ENCODE measurements at regions of chr10 and their contacts with region 1.

Region 1: DNA sequence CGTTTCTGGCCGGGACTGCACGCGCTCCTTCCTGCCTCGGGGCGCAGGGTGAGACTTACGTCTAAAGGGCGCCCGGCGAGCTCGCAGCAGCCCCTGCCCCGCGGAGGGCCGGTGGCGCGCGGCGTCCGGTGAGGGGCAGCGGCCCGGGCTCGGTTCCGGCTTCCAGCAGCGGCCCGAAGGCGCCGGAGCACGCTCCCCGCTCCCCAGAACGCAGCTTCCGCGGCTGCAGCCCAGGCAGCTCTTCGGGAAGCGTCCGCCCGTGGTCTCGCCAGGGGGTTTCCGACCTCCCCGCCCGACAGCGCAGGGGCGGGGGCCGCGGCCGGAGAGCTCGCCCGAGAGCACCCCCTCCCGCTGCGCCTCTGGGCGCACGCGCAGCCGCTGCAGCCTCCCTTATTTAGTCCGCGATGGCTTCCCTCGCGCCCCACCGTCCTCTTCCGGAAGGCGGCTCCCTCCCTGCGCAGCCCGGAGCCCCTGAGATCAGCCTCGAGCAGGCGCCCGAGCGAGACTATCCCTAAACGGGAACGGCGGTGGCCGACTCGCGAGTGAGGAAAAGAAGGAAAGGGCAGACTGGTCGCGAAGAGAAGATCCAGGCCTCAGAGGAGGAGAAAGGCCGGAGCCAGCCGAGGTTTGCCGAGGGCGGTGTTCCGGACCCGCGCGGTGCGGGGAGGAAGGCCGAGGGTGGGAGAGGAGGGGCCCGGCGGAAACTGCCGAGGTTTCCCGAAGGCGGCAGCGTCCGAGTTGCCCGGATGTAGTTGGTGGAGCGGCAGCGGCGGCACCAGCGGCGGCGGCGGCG is at the start of gene WAC:
- DNase-seq: peak; percentile 96 to 99 (median 97)
- H3K4me3 ChIP-seq: peak within 1 kb of the TSS; percentile 82 to 86
- H3K4me3 Mint-ChIP-seq: peak within 1 kb of the TSS; percentile 98 to 100 (median 99)
- H3K27ac ChIP-seq: peak within 1 kb of the TSS; percentile 99
- H3K27ac Mint-ChIP-seq: peak within 1 kb of the TSS; percentile 99 to 100 (median 100)
- H3K4me1 ChIP-seq: peaks cover 55% of the 10 kb centered on the region
- H3K4me1 Mint-ChIP-seq: peaks cover 45 to 75% (median 61%) of the 10 kb centered on the region in 4 donors
- H3K27me3 ChIP-seq: no peaks in the 10 kb centered on the region
- H3K27me3 Mint-ChIP-seq: no peaks in the 10 kb centered on the region
- total RNA-seq, gene WAC: 170 to 174 TPM

Region 2: GRCh38 chr10:27099916-27100812 is 1432.4 kb before region 1 on chr10 and contains the start of gene ANKRD26:
- CTCF ChIA-PET with region 1: no interaction called
- POLR2A ChIA-PET with region 1: no interaction called
- intact Hi-C with region 1: loop called (anchors 5 kb)
- DNase-seq: peak; percentile 95 to 96 (median 95)
- H3K4me3 ChIP-seq: peak within 1 kb of the TSS; percentile 58 to 67
- H3K4me3 Mint-ChIP-seq: peak within 1 kb of the TSS; percentile 92 to 99 (median 96)
- H3K27ac ChIP-seq: peak within 1 kb of the TSS; percentile 76
- H3K27ac Mint-ChIP-seq: peak within 1 kb of the TSS; percentile 94 to 99 (median 98)
- H3K4me1 ChIP-seq: peaks cover 33% of the 10 kb centered on the region
- H3K4me1 Mint-ChIP-seq: peaks cover 21 to 49% (median 37%) of the 10 kb centered on the region in 4 donors
- H3K27me3 ChIP-seq: no peaks in the 10 kb centered on the region
- H3K27me3 Mint-ChIP-seq: no peaks in the 10 kb centered on the region
- total RNA-seq, gene ANKRD26: 10.7 to 11.6 TPM

Region 3: GRCh38 chr10:27241652-27242472 is 1290.7 kb before region 1 on chr10:
- CTCF ChIA-PET with region 1: no interaction called
- POLR2A ChIA-PET with region 1: interaction called, 6 read pairs
- intact Hi-C with region 1: loop called (anchors 5 kb)
- DNase-seq: peak; percentile 85 to 88 (median 87)
- H3K4me3 ChIP-seq: peak overlapping the region; percentile 66 to 94
- H3K4me3 Mint-ChIP-seq: peak overlapping the region; percentile 95 to 99 (median 99)
- H3K27ac ChIP-seq: peak overlapping the region; percentile 89
- H3K27ac Mint-ChIP-seq: peak overlapping the region; percentile 98 to 100 (median 99)
- H3K4me1 ChIP-seq: peaks cover 36% of the 10 kb centered on the region
- H3K4me1 Mint-ChIP-seq: peaks cover 20 to 54% (median 31%) of the 10 kb centered on the region in 4 donors
- H3K27me3 ChIP-seq: no peaks in the 10 kb centered on the region
- H3K27me3 Mint-ChIP-seq: peaks cover 0 to 3% of the 10 kb centered on the region in 2 donors

Region 4: DNA sequence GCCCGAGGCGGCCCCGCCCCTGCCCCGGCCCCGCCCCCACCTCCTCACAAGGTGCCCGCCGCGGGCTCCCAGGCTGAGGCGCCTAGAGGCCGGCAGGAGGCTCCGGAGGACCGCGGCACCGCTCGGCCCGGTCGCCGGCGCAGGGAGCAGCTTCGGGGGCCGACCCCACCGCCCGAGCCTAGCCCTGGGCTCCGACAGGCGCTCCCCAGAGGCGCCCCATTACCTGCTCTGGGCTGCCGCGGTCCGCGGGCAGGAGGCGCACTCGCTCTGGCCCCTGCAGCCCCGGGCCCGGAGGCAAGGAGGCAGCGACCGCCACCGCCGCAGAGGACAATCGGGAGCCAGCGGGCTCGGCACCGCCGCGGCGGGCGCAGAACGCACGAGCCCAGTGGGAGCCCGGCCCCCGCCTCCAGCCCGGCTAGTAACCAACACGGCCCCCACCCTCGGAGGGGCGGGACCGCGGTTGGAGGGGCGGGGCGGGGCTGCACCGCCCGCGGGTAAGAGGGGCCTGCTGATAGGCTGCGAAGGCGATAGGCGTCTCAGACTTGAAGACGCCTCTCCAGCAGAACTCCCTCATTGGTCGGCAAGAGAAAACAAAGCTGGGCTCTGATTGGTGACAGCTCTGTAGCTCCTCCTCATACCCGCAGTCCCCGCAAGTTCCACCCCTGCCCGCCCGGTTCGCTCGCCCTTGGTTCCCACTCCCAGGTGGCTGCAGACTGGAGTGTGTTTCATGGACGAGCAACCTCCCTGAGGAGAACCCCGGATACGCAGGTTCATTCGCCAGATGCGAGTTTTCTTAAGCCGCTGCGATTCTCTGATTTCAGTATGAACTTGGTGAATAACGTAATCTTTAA is 229.7 kb before region 1 on chr10 and contains the start of gene MPP7:
- CTCF ChIA-PET with region 1: no interaction called
- POLR2A ChIA-PET with region 1: no interaction called
- intact Hi-C with region 1: loop called (anchors 1 kb)
- DNase-seq: peak; percentile 96 to 98 (median 97)
- H3K4me3 ChIP-seq: peak within 1 kb of the TSS; percentile 82 to 93
- H3K4me3 Mint-ChIP-seq: peak within 1 kb of the TSS; percentile 88 to 97 (median 94)
- H3K27ac ChIP-seq: peak within 1 kb of the TSS; percentile 51
- H3K27ac Mint-ChIP-seq: peak within 1 kb of the TSS; percentile 87 to 95 (median 93)
- H3K4me1 ChIP-seq: peaks cover 48% of the 10 kb centered on the region
- H3K4me1 Mint-ChIP-seq: peaks cover 44 to 76% (median 57%) of the 10 kb centered on the region in 4 donors
- H3K27me3 ChIP-seq: no peaks in the 10 kb centered on the region
- H3K27me3 Mint-ChIP-seq: no peaks in the 10 kb centered on the region
- total RNA-seq, gene MPP7: 24.9 to 28.1 TPM

Region 5: GRCh38 chr10:28367929-28368484 is 164.6 kb before region 1 on chr10:
- CTCF ChIA-PET with region 1: no interaction called
- POLR2A ChIA-PET with region 1: interaction called, 9 read pairs
- intact Hi-C with region 1: loop called (anchors 10 kb)
- DNase-seq: peak; percentile 74 to 86 (median 80)
- H3K4me3 ChIP-seq: no peak overlapping the region
- H3K4me3 Mint-ChIP-seq: peak overlapping the region; percentile 41 to 87 (median 80)
- H3K27ac ChIP-seq: peak overlapping the region; percentile 65
- H3K27ac Mint-ChIP-seq: peak overlapping the region; percentile 85 to 98 (median 97)
- H3K4me1 ChIP-seq: peaks cover 58% of the 10 kb centered on the region
- H3K4me1 Mint-ChIP-seq: peaks cover 33 to 61% (median 49%) of the 10 kb centered on the region in 4 donors
- H3K27me3 ChIP-seq: no peaks in the 10 kb centered on the region
- H3K27me3 Mint-ChIP-seq: no peaks in the 10 kb centered on the region

Region 6: GRCh38 chr10:28545967-28546644 is 13.5 kb after region 1 on chr10:
- CTCF ChIA-PET with region 1: no interaction called
- POLR2A ChIA-PET with region 1: interaction called, 46 read pairs
- intact Hi-C with region 1: loop called (anchors 2 kb)
- DNase-seq: no peak
- H3K4me3 ChIP-seq: no peak overlapping the region
- H3K4me3 Mint-ChIP-seq: peak overlapping the region in 7 of 8 donors; percentile 1 to 68 (median 27)
- H3K27ac ChIP-seq: no peak overlapping the region
- H3K27ac Mint-ChIP-seq: peak overlapping the region in 5 of 7 donors; percentile 9 to 58 (median 24)
- H3K4me1 ChIP-seq: peaks cover 75% of the 10 kb centered on the region
- H3K4me1 Mint-ChIP-seq: peaks cover 55 to 83% (median 71%) of the 10 kb centered on the region in 4 donors
- H3K27me3 ChIP-seq: no peaks in the 10 kb centered on the region
- H3K27me3 Mint-ChIP-seq: no peaks in the 10 kb centered on the region

Region 7: DNA sequence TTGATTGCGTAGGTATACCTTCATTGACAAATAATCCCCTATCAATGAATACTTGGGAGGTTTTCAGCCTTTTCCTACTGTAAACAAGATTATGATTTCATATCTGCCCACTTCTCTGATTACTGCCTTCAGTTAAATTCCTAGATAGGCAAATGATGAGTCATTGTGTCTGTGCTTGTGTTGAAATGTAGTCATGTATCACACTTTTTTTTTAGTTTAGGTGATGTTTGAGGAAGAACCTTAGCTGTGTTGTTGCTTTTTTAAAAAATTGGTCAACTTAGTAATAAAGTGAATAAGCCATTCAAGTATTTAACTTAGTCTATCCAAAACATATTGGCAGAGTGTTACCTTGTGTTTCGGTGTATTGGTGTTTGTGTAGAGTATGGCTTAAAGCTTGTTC is 60.4 kb after region 1 on chr10:
- CTCF ChIA-PET with region 1: interaction called, 3 read pairs
- POLR2A ChIA-PET with region 1: interaction called, 3 read pairs
- intact Hi-C with region 1: loop called (anchors 5 kb)
- DNase-seq: no peak
- H3K4me3 ChIP-seq: no peak overlapping the region
- H3K4me3 Mint-ChIP-seq: peak overlapping the region in 6 of 8 donors; percentile 10 to 61 (median 53)
- H3K27ac ChIP-seq: no peak overlapping the region
- H3K27ac Mint-ChIP-seq: peak overlapping the region in 5 of 7 donors; percentile 16 to 61 (median 57)
- H3K4me1 ChIP-seq: peaks cover 40% of the 10 kb centered on the region
- H3K4me1 Mint-ChIP-seq: peaks cover 35 to 71% (median 57%) of the 10 kb centered on the region in 4 donors
- H3K27me3 ChIP-seq: no peaks in the 10 kb centered on the region
- H3K27me3 Mint-ChIP-seq: no peaks in the 10 kb centered on the region